ENCODE measurements at regions of chr6 and their contacts with region 1.

Region 1: DNA sequence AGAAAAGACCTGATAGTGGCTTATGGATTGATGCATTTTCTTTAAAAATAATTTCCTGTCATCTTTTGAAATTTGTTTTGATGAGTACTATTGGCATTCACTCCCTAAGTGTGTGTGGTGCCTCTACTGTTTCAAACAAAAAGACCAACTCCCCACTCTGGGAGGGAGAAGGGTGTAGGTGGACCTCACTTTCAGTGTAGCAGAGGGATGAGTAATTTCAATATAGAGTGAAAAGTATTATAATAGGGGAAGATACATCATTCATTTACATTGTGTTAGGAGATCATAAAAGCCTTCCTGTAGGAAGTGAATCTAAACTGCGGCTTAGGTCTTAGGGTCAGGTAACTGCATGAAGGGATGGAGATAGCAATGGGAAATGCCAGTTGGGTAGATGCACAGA is 46.4 kb downstream of the SAMD3 start:
- DNase-seq: no peak
- ATAC-seq: no peak

Region 2: GRCh38 chr6:130200020-130200419 is 23.6 kb after region 1 on chr6:
- intact Hi-C with region 1: loop called (anchors 2 kb)
- DNase-seq: no peak
- ATAC-seq: no peak

Measured in left ventricle myocardium superior (tissue), 1 donor.